Left ventricle myocardium inferior (tissue), 1 donor: ENCODE measurements at regions of chr10 and their contacts with region 1.

Region 1: DNA sequence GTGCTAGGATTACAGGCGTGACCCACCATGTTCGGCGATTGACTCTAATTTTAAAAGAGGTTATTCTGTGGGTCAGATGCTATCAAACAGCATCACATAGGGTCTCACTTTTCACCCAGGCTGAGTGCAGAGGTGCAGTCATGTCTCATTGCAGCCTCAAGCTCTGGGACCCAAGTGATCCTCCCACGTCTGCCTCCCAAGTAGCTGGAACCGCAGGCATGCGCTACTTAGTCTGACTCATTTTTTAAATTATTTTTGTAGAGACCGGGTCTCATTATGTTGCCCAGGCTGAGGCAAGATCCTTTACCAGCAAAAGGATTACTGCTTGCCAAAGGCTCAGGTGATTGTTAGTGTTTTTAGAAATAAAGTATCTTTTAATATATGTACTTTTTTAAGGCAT is 42.9 kb upstream of the STOX1 start:
- DNase-seq: no peak
- H3K4me3 ChIP-seq: no peak overlapping the region
- H3K27ac ChIP-seq: no peak overlapping the region
- H3K4me1 ChIP-seq: no peaks in the 10 kb centered on the region
- H3K27me3 ChIP-seq: no peaks in the 10 kb centered on the region
- CTCF ChIP-seq: no peak

Region 2: GRCh38 chr10:68732651-68733050 is 51.8 kb before region 1 on chr10:
- intact Hi-C with region 1: no loop called
- DNase-seq: no peak
- H3K4me3 ChIP-seq: no peak overlapping the region
- H3K27ac ChIP-seq: no peak overlapping the region
- H3K4me1 ChIP-seq: no peaks in the 10 kb centered on the region
- H3K27me3 ChIP-seq: no peaks in the 10 kb centered on the region
- CTCF ChIP-seq: no peak

Region 3: DNA sequence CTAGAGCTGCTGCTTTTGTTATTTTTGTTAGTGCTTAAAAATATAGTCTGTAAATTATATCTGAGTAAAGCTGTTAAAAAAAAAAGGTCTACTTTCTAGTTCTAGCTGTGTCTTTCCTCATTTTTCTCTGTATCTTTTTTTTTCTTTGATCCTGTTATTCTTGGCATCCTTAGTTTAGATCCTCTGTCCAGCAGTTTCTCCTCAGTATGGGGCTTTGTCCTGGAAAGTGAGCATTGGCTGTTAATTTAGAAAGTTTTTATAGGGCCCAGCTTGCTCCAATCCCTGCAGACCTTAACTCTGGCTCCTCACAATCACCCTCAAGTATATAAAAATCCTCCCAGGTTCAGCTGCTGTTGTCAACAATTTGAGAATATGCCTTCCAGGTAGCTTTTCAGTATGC is 140.1 kb after region 1 on chr10:
- intact Hi-C with region 1: loop called (anchors 10 kb)
- DNase-seq: no peak
- H3K4me3 ChIP-seq: no peak overlapping the region
- H3K27ac ChIP-seq: no peak overlapping the region
- H3K4me1 ChIP-seq: peaks cover 4% of the 10 kb centered on the region
- H3K27me3 ChIP-seq: no peaks in the 10 kb centered on the region
- CTCF ChIP-seq: no peak